ENCODE measurements at regions of chr7 and their contacts with region 1.

Region 1: DNA sequence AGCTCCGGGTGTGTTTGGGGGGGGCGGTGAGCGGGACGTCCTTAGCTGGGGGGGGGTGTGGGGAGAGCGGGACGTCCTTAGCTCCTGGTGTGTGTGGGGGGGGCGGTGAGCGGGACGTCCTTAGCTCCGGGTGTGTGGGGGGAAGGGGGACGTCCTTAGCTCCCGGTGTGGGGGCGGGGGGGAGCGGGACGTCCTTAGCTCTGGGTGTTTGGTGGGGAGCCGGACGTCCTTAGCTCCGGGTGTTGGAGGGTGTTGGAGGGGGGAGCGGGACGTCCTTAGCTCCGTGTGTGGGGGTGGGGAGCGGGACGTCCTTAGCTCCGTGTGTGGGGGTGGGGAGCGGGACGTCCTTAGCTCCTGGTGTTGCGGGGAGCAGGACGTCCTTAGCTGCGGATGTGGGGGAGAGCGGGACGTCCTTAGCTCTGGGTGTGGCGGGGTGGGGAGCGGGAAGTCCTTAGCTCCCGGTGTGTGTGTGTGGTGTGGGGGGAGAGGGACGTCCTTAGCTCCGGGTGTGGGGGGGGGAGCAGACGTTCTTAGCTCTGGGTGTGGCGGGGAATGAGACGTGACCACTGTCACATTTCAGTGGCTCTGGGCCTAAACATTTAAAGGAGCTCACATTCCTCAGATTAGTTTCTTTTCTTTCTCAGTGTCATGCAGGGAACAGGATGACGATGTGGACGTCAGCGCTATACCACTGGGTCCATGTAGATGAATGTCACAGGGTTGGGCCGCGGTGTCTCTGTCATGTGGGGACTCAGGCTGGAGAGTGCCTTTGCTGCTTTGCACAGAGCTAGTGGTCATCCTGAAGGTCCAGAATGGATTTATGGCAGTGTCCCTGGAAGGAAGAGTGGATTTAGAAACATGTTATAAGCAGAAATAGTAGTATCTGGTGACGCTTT is 7.5 kb downstream of the DYNC2I1 start:
- DNase-seq: peak; percentile 72
- H3K4me3 Mint-ChIP-seq: peak overlapping the region; percentile 78
- H3K27ac Mint-ChIP-seq: peak overlapping the region; percentile 91
- H3K4me1 Mint-ChIP-seq: peaks cover 40% of the 10 kb centered on the region
- H3K27me3 Mint-ChIP-seq: no peaks in the 10 kb centered on the region

Region 2: GRCh38 chr7:158734861-158735260 is 129.0 kb before region 1 on chr7:
- CTCF ChIA-PET with region 1: no interaction called
- intact Hi-C with region 1: no loop called
- DNase-seq: no peak
- H3K4me3 Mint-ChIP-seq: no peak overlapping the region
- H3K27ac Mint-ChIP-seq: no peak overlapping the region
- H3K4me1 Mint-ChIP-seq: peaks cover 9% of the 10 kb centered on the region
- H3K27me3 Mint-ChIP-seq: no peaks in the 10 kb centered on the region

Region 3: GRCh38 chr7:158957921-158958491 is 94.1 kb after region 1 on chr7:
- CTCF ChIA-PET with region 1: no interaction called
- intact Hi-C with region 1: loop called (anchors 5 kb)
- DNase-seq: peak; percentile 52
- H3K4me3 Mint-ChIP-seq: peak overlapping the region; percentile 69
- H3K27ac Mint-ChIP-seq: no peak overlapping the region
- H3K4me1 Mint-ChIP-seq: peaks cover 10% of the 10 kb centered on the region
- H3K27me3 Mint-ChIP-seq: peaks cover 10% of the 10 kb centered on the region

Measured in activated naive CD4-positive, alpha-beta T cell treated with anti-CD3 and anti-CD28 coated beads for 36 hours (primary cell).